ENCODE measurements at regions of chr1 and their contacts with region 1.

Region 1: DNA sequence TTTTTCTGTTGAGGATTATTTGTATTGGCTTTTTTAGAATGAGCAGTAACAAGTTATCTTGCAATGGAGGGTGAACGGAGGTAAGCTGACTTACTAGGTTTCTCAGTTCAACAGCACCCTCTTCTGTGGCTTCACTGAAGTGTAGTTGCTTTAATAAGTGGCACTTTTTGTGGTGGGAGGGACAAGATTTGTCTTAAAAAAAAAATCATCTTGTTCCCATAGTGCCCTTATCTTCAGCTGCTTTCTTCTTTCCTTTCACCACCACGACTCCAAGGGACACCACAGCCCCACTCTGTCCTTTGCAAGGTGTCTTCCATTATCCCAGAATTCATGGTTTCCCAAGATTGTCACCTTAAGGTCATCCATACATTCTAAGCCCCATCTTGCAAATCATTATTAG is 92.9 kb downstream of the PIGK start:
- DNase-seq: peak; percentile 39
- H3K4me3 Mint-ChIP-seq: no peak overlapping the region
- H3K27ac Mint-ChIP-seq: no peak overlapping the region
- H3K4me1 Mint-ChIP-seq: no peaks in the 10 kb centered on the region
- H3K27me3 Mint-ChIP-seq: no peaks in the 10 kb centered on the region
- CTCF ChIP-seq: peak; percentile 19

Region 2: GRCh38 chr1:76330991-76331603 is 795.2 kb before region 1 on chr1:
- CTCF ChIA-PET with region 1: no interaction called
- intact Hi-C with region 1: loop called (anchors 5 kb)
- DNase-seq: peak; percentile 32
- H3K4me3 Mint-ChIP-seq: no peak overlapping the region
- H3K27ac Mint-ChIP-seq: no peak overlapping the region
- H3K4me1 Mint-ChIP-seq: no peaks in the 10 kb centered on the region
- H3K27me3 Mint-ChIP-seq: no peaks in the 10 kb centered on the region
- CTCF ChIP-seq: peak; percentile 70

Region 3: GRCh38 chr1:76697361-76697760 is 428.9 kb before region 1 on chr1:
- CTCF ChIA-PET with region 1: no interaction called
- intact Hi-C with region 1: no loop called
- DNase-seq: no peak
- H3K4me3 Mint-ChIP-seq: no peak overlapping the region
- H3K27ac Mint-ChIP-seq: no peak overlapping the region
- H3K4me1 Mint-ChIP-seq: no peaks in the 10 kb centered on the region
- H3K27me3 Mint-ChIP-seq: no peaks in the 10 kb centered on the region
- CTCF ChIP-seq: no peak

Region 4: GRCh38 chr1:76868154-76868882 is 258.0 kb before region 1 on chr1:
- CTCF ChIA-PET with region 1: no interaction called
- intact Hi-C with region 1: no loop called
- DNase-seq: no peak
- H3K4me3 Mint-ChIP-seq: no peak overlapping the region
- H3K27ac Mint-ChIP-seq: no peak overlapping the region
- H3K4me1 Mint-ChIP-seq: no peaks in the 10 kb centered on the region
- H3K27me3 Mint-ChIP-seq: no peaks in the 10 kb centered on the region
- CTCF ChIP-seq: no peak